Endothelial cell of umbilical vein (primary cell): ENCODE measurements at regions of chr10 and their contacts with region 1.

Region 1: DNA sequence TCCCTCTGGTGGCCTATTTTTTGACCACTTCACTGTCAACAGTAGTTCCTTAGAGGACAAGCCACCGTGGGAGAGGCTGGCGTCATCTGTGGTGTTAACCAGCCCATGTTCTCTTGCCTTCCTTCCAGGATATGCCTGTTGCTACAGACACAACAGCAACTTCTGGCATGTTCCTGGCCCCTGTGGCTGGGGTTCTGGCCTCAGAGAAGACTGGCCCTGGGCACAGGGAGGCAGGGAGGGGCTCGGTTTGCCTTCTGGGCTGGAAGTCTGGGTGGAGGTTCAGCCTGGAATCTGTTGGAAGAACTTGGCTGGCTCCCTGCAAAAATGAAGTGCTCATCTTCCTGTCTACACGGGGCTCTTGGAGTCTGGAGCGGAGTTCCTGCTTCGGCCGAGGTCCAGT is 25.7 kb downstream of the GOLGA7B start:
- DNase-seq: peak; percentile 85
- H3K4me3 ChIP-seq: no peak overlapping the region
- H3K27ac ChIP-seq: no peak overlapping the region
- H3K4me1 ChIP-seq: no peaks in the 10 kb centered on the region
- H3K27me3 ChIP-seq: peaks cover 13% of the 10 kb centered on the region in 2 experiments
- CTCF ChIP-seq: no peak
- POLR2A ChIP-seq: no peak

Region 2: GRCh38 chr10:97648562-97649404 is 226.6 kb before region 1 on chr10:
- CTCF ChIA-PET with region 1: no interaction called
- POLR2A ChIA-PET with region 1: no interaction called
- dilution Hi-C with region 1: no loop called
- intact Hi-C with region 1: no loop called
- DNase-seq: peak; percentile 89
- H3K4me3 ChIP-seq: no peak overlapping the region
- H3K27ac ChIP-seq: peak overlapping the region; percentile 87
- H3K4me1 ChIP-seq: peaks cover 17% of the 10 kb centered on the region
- H3K27me3 ChIP-seq: no peaks in the 10 kb centered on the region
- CTCF ChIP-seq: no peak
- POLR2A ChIP-seq: no peak

Region 3: GRCh38 chr10:97752956-97753355 is 122.4 kb before region 1 on chr10:
- CTCF ChIA-PET with region 1: no interaction called
- POLR2A ChIA-PET with region 1: interaction called, 12 read pairs
- dilution Hi-C with region 1: no loop called
- intact Hi-C with region 1: no loop called
- DNase-seq: no peak
- H3K4me3 ChIP-seq: no peak overlapping the region
- H3K27ac ChIP-seq: no peak overlapping the region
- H3K4me1 ChIP-seq: no peaks in the 10 kb centered on the region
- H3K27me3 ChIP-seq: no peaks in the 10 kb centered on the region
- CTCF ChIP-seq: no peak
- POLR2A ChIP-seq: no peak

Region 4: DNA sequence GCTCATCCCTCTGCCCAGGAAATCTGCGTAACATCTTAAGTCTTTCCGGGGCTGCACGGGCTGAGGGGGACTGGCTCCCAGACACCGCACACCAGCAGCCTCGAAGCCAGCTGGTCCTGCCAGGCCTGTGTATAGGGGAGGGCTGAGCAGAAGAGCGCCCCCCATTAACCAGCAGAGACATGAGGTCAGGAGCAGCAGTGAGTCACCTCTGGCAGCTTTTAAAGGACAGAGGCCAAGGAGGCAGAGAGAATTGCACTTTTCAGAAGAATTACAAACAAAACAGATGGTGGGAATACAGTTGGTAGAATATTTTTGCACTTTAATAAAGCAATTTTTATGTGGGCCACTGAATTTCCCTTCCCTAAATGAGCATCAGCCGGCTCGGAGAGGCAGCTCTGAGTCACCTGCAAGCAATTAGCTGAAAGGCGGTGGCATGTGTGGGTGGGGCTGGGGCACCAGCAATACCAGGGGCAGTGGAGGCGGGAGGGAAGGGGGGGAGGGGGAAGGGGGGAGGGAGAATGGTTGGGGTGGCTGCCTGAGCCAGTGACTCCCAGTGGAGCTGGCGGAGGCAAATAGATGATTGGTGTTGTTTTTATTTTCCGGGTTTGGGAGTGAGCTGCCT is 13.4 kb after region 1 on chr10:
- CTCF ChIA-PET with region 1: interaction called, 19 read pairs
- POLR2A ChIA-PET with region 1: no interaction called
- dilution Hi-C with region 1: no loop called
- intact Hi-C with region 1: no loop called
- DNase-seq: peak; percentile 54
- H3K4me3 ChIP-seq: no peak overlapping the region
- H3K27ac ChIP-seq: no peak overlapping the region
- H3K4me1 ChIP-seq: peaks cover 2% of the 10 kb centered on the region
- H3K27me3 ChIP-seq: no peaks in the 10 kb centered on the region
- CTCF ChIP-seq: peak; percentile 4 to 13
- POLR2A ChIP-seq: no peak